Activated T-helper 1 cell treated with anti-CD3 and anti-CD28 coated beads, Interleukin-12 subunit alpha, Interleukin-12 subunit beta, Interleukin-2, Interleukin-4 antibody, amounts not matched to agents 30 ng/mL and 10 ng/mL and 1 ng/mL, durations not matched to agents 14 hours and 24 hours and 36 hours (primary cell): ENCODE measurements at regions of chr12 and their contacts with region 1.

Region 1: GRCh38 chr12:112061137-112061536 is 47.4 kb downstream of the NAA25 start:
- DNase-seq: no peak
- H3K4me3 Mint-ChIP-seq: no peak overlapping the region
- H3K27ac Mint-ChIP-seq: no peak overlapping the region
- H3K4me1 Mint-ChIP-seq: no peaks in the 10 kb centered on the region
- H3K27me3 Mint-ChIP-seq: no peaks in the 10 kb centered on the region

Region 2: GRCh38 chr12:112025808-112026375 is 35.2 kb before region 1 on chr12:
- intact Hi-C with region 1: loop called (anchors 5 kb)
- DNase-seq: no peak
- H3K4me3 Mint-ChIP-seq: peak overlapping the region; percentile 1
- H3K27ac Mint-ChIP-seq: peak overlapping the region; percentile 64
- H3K4me1 Mint-ChIP-seq: peaks cover 31% of the 10 kb centered on the region
- H3K27me3 Mint-ChIP-seq: no peaks in the 10 kb centered on the region

Region 3: DNA sequence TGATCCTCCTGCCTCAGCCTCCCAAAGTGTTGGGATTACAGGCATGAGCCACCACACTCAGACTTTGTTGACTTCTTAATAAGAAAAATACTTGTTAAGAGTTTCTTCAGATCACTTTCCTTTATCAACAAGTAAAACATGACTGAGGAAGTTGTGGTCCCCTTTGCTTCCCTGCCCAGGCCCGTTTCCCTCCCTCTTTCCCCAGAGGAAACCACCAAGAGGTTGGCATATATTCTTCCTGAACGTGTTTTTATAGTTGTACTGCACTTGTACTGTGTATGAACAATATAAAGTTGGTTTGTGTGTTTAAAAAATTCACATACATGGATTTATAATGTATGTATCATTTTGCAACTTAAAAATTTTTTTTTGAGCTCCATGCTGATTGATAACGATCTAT is 386.0 kb after region 1 on chr12:
- intact Hi-C with region 1: no loop called
- DNase-seq: no peak
- H3K4me3 Mint-ChIP-seq: no peak overlapping the region
- H3K27ac Mint-ChIP-seq: peak overlapping the region; percentile 63
- H3K4me1 Mint-ChIP-seq: peaks cover 16% of the 10 kb centered on the region
- H3K27me3 Mint-ChIP-seq: no peaks in the 10 kb centered on the region

Region 4: GRCh38 chr12:112482733-112483132 is 421.6 kb after region 1 on chr12:
- intact Hi-C with region 1: no loop called
- DNase-seq: no peak
- H3K4me3 Mint-ChIP-seq: no peak overlapping the region
- H3K27ac Mint-ChIP-seq: no peak overlapping the region
- H3K4me1 Mint-ChIP-seq: peaks cover 11% of the 10 kb centered on the region
- H3K27me3 Mint-ChIP-seq: no peaks in the 10 kb centered on the region